CD4-positive, alpha-beta memory T cell (primary cell): ENCODE measurements at regions of chrX and their contacts with region 1.

Region 1: GRCh38 chrX:48696301-48697181 is at the start of gene SUV39H1:
- DNase-seq: peak; percentile 86 to 91 (median 89)
- H3K4me3 ChIP-seq: peak within 1 kb of the TSS; percentile 48 to 74
- H3K4me3 Mint-ChIP-seq: peak within 1 kb of the TSS; percentile 88 to 98 (median 90)
- H3K27ac ChIP-seq: peak within 1 kb of the TSS; percentile 78
- H3K27ac Mint-ChIP-seq: peak within 1 kb of the TSS; percentile 95 to 98 (median 97)
- H3K4me1 ChIP-seq: peaks cover 20% of the 10 kb centered on the region
- H3K4me1 Mint-ChIP-seq: peaks cover 9 to 28% (median 19%) of the 10 kb centered on the region in 4 donors
- H3K27me3 ChIP-seq: no peaks in the 10 kb centered on the region
- H3K27me3 Mint-ChIP-seq: no peaks in the 10 kb centered on the region
- total RNA-seq, gene SUV39H1: 8.7 to 10.2 TPM

Region 2: GRCh38 chrX:48676106-48676892 is 20.2 kb before region 1 on chrX:
- CTCF ChIA-PET with region 1: no interaction called
- POLR2A ChIA-PET with region 1: interaction called, 24 read pairs
- intact Hi-C with region 1: loop called (anchors 1 kb)
- DNase-seq: peak; percentile 87 to 88 (median 88)
- H3K4me3 ChIP-seq: peak overlapping the region; percentile 36 to 69
- H3K4me3 Mint-ChIP-seq: peak overlapping the region; percentile 89 to 93 (median 92)
- H3K27ac ChIP-seq: peak overlapping the region; percentile 78
- H3K27ac Mint-ChIP-seq: peak overlapping the region; percentile 77 to 96 (median 94)
- H3K4me1 ChIP-seq: peaks cover 21% of the 10 kb centered on the region
- H3K4me1 Mint-ChIP-seq: peaks cover 8 to 25% (median 14%) of the 10 kb centered on the region in 4 donors
- H3K27me3 ChIP-seq: no peaks in the 10 kb centered on the region
- H3K27me3 Mint-ChIP-seq: no peaks in the 10 kb centered on the region

Region 3: GRCh38 chrX:48683411-48683982 is 13.0 kb before region 1 on chrX and contains the start of gene WAS:
- CTCF ChIA-PET with region 1: interaction called, 3 read pairs
- POLR2A ChIA-PET with region 1: interaction called, 48 read pairs
- intact Hi-C with region 1: no loop called
- DNase-seq: peak; percentile 54 to 63 (median 58)
- H3K4me3 ChIP-seq: peak within 1 kb of the TSS; percentile 79 to 93
- H3K4me3 Mint-ChIP-seq: peak within 1 kb of the TSS; percentile 86 to 95 (median 93)
- H3K27ac ChIP-seq: peak within 1 kb of the TSS; percentile 69
- H3K27ac Mint-ChIP-seq: peak within 1 kb of the TSS; percentile 88 to 95 (median 93)
- H3K4me1 ChIP-seq: peaks cover 48% of the 10 kb centered on the region
- H3K4me1 Mint-ChIP-seq: peaks cover 32 to 66% (median 44%) of the 10 kb centered on the region in 4 donors
- H3K27me3 ChIP-seq: no peaks in the 10 kb centered on the region
- H3K27me3 Mint-ChIP-seq: no peaks in the 10 kb centered on the region
- total RNA-seq, gene WAS: 108 to 110 TPM

Region 4: DNA sequence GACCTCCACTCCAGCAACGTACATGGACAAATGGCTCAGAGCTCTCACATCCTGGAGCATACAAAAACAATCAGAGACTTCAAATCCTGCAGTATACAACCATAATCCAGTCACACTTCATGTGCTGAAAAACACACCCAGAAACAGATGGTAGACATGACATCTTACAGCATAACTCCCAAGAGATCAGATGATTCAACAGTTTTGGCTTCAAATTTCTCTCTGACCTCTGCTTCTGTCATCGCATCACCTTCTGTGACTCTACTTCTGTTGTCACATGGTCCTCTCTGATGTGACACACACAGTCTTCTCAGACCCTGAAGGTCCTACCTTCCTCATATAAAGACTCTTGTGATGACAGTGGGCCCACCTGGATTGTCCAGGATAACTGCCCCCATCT is 18.5 kb after region 1 on chrX:
- CTCF ChIA-PET with region 1: no interaction called
- POLR2A ChIA-PET with region 1: interaction called, 36 read pairs
- intact Hi-C with region 1: loop called (anchors 2 kb)
- DNase-seq: no peak
- H3K4me3 ChIP-seq: no peak overlapping the region
- H3K4me3 Mint-ChIP-seq: peak overlapping the region; percentile 2 to 75 (median 47)
- H3K27ac ChIP-seq: peak overlapping the region; percentile 47
- H3K27ac Mint-ChIP-seq: peak overlapping the region; percentile 83 to 97 (median 95)
- H3K4me1 ChIP-seq: peaks cover 90% of the 10 kb centered on the region
- H3K4me1 Mint-ChIP-seq: peaks cover 76 to 85% (median 80%) of the 10 kb centered on the region in 4 donors
- H3K27me3 ChIP-seq: no peaks in the 10 kb centered on the region
- H3K27me3 Mint-ChIP-seq: no peaks in the 10 kb centered on the region